Left ventricle myocardium superior (tissue), 1 donor: ENCODE measurements at regions of chr15 and their contacts with region 1.

Region 1: GRCh38 chr15:91055548-91056331 is 33.3 kb upstream of the VPS33B start:
- DNase-seq: peak; percentile 42
- ATAC-seq: peak; percentile 87

Region 2: DNA sequence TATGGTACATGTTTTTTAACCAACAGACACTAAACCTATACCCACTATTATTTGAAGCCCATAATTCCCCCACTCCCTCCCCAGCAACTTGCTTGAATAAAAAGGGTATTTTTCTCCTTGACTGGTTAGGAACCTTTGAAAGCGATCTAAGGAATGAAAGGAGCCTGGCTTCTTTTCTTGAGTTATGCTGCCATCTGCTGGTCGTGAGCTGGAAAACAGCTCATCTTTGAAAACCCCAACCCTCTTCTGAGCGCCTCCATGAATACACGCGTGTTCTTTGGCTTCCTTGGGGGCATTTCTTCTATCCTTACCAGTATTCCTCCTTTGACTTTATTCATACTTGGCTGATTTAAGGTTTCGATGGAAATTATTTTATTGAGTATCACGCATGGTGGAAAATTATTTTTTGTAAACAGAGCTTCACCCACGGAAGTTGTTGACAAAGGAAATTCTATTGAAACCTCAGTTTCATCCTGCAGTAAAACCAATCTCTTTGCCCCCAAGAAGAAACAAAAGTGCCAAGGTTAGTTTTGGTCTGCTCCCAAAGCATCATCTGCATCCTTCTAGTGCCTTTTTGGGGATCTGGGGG is 215.9 kb after region 1 on chr15:
- intact Hi-C with region 1: loop called (anchors 2 kb)
- DNase-seq: peak; percentile 41
- ATAC-seq: peak; percentile 75

Region 3: GRCh38 chr15:91965501-91966184 is 909.9 kb after region 1 on chr15:
- intact Hi-C with region 1: no loop called
- DNase-seq: no peak
- ATAC-seq: peak; percentile 29